Right lobe of liver (tissue), 6 donors: ENCODE measurements at regions of chr4 and their contacts with region 1.

Region 1: DNA sequence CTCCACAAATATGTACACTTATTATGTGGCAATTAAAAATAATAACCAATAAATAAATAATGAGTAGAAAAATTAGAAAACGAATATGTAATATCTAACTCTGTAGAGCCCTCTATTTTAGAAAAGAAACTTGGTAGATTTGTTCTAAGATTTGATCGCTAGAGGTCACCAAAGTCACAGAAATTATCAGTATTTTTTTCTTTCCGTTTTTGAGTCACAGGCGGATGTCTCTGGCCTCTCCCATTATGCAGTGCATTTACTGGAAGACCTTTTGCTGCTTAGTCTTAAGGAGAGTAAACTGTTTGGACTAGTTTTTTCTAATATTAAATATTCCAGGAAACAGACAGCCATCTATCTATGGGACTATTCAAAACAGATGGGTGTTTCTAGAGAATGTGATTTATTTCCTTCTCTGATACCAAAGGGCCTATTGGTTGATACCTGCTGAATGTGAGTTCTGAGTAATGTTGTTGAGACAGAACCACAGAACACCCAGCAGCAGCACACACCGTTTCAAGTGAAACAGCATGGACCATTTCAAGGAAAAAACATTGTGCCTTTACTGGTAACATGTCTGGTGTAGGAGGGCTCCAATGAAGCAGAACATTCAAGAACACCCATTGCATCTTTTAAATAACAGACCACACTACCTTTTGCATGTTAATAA is 34.0 kb upstream of the GYPA start:
- DNase-seq: no peak
- ATAC-seq: peak; percentile 71 to 90 (median 76)
- H3K4me3 ChIP-seq: no peak overlapping the region
- H3K27ac ChIP-seq: no peak overlapping the region
- H3K4me1 ChIP-seq: no peaks in the 10 kb centered on the region
- H3K27me3 ChIP-seq: no peaks in the 10 kb centered on the region
- CTCF ChIP-seq: peak; percentile 50 to 56 (median 52)
- POLR2A ChIP-seq: no peak

Region 2: DNA sequence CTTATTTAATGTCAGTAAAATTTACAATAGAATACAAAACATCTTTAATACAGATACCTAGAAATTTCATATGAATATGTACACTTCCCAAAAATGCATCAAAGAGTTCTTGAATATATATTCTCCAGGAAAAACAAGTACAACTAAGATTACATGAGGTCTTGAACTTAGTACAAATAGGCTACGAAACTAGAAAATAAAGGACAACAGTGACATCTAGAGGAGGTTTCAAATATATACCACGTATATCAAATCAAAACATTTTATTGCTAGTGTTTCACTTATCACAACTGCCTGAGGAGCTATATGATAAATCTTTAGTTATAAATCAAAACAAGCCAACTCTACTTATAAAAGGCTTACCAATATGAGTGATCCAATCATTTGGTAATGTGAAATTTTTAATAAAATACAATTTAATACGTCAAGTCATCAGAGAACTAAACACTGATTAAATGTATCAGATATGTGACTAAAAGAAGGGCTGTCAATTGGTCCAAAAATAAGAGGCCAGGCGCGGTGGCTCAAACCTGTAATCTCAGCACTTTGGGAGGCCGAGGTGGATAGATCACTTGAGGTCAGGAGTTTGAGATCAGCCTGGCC is 886.9 kb after region 1 on chr4:
- intact Hi-C with region 1: loop called (anchors 10 kb)
- DNase-seq: no peak
- ATAC-seq: peak; percentile 79 to 85 (median 82)
- H3K4me3 ChIP-seq: no peak overlapping the region
- H3K27ac ChIP-seq: no peak overlapping the region
- H3K4me1 ChIP-seq: peaks cover 0 to 4% (median 0%) of the 10 kb centered on the region in 4 donors
- H3K27me3 ChIP-seq: no peaks in the 10 kb centered on the region
- CTCF ChIP-seq: peak; percentile 50 to 55 (median 54)
- POLR2A ChIP-seq: no peak